ENCODE measurements at regions of chr14 and their contacts with region 1.

Region 1: DNA sequence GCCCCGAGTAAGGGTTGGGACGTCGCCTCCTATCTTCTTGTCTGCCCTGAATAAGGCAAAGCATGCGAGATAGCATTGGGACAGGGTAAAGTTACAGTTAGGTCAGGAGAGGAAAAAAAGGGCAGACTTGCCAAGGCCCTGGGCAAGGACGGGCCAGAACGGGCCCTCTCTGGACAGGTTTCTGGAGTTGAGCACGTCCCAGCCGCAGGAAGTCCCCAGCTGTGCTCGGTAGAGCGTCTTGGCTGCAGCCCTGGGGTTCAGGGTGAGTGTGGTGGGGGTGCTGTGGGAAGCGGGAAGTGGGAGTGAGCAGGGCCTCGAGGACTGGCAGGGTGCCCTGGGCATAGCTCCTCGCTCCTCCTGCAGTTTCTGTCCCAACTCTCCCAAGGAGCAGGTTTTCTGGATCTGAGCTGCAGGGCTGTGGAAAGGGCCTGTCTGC is 5.4 kb downstream of the RPS6KL1 start:
- DNase-seq: peak; percentile 74 to 86
- H3K4me3 ChIP-seq: no peak overlapping the region
- H3K27ac ChIP-seq: peak overlapping the region; percentile 57 to 58
- H3K4me1 ChIP-seq: peaks cover 0 to 31% (median 21%) of the 10 kb centered on the region in 4 donors
- H3K27me3 ChIP-seq: no peaks in the 10 kb centered on the region
- CTCF ChIP-seq: no peak

Region 2: DNA sequence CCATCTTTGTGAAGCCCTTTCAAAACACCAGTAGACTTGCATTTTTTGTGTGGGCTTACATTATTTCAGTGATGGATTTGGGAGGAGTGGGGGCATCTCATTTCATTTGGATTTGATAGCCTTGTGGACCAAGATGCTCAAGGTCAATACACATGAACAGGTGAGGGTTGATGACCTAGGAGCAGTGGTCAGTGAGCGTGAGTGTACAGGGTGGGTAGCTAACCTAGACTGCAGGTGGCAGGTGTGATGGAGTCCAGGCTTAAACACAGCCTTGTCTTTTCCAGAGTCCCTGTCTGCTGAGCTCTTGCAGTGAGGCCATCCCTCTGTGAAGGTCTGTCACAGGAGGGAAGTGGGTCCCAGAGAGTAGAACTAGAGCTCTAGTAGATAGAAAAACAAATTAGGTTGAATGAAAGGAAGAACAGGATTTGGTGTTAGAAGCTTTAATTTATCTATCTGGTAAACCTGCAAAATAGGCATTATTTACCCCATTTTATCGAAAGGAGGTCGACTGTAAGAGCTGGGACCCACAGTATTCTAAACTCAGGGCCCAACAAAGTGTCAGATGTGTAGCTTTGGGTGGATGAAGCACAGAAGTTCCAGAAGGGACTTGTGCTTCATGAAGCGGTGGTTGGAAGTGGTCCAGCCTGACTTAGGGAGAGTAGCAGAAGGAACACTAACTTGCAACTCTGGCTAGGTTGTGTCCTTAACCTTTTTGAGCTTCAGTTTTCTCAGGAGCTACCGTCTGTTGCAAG is 12.9 kb before region 1 on chr14:
- intact Hi-C with region 1: no loop called
- DNase-seq: no peak
- H3K4me3 ChIP-seq: no peak overlapping the region
- H3K27ac ChIP-seq: no peak overlapping the region
- H3K4me1 ChIP-seq: peaks cover 0 to 22% (median 13%) of the 10 kb centered on the region in 4 donors
- H3K27me3 ChIP-seq: no peaks in the 10 kb centered on the region
- CTCF ChIP-seq: no peak

Region 3: DNA sequence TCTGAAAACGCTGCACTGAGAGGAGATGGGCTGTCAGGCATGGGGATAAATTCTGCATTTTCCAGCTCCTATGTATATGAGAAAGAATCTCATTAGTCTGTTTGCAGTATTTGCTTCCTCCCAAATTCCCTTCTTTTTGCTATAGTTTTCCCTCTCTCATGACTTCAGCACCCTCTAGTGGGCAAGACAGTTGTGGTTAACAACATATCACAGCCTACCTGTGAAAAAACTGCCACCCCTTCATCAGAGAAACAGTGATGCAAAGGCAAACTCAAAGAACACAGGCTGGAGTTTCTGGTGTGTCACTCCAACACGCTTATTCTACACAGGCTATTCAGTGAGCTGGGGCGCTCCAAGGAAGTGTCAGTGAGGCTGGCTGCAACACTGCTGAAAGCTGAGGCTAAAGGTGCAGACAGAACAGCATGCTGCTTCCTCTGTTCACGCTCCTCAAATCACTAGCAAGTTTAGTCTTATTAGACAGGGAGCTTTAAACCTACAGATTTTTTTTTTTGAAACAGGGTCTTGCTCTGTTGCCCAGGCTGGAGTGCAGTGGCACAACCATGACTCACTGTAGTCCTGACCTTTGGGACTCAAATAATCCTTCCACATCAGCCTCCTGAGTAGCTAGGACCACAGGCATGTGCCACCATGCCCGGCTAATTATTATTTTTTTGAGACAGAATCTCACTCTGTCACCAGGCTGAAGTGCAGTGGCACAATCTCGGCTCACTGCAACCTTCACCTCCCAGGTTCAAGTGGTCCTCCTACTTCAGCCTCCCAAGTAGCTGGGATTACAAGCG is 171.1 kb after region 1 on chr14:
- intact Hi-C with region 1: loop called (anchors 2 kb)
- DNase-seq: peak in 1 of 2 donors; percentile 51
- H3K4me3 ChIP-seq: no peak overlapping the region
- H3K27ac ChIP-seq: no peak overlapping the region
- H3K4me1 ChIP-seq: no peaks in the 10 kb centered on the region
- H3K27me3 ChIP-seq: no peaks in the 10 kb centered on the region
- CTCF ChIP-seq: peak; percentile 81 to 82

Measured in tibial artery (tissue), 4 donors.